IMR-90 (cell line): ENCODE measurements at regions of chr7 and their contacts with region 1.

Region 1: GRCh38 chr7:26667500-26668133 is 196.8 kb downstream of the SKAP2 start:
- DNase-seq: peak; percentile 90
- ATAC-seq: peak; percentile 96
- H3K4me3 ChIP-seq: no peak overlapping the region
- H3K27ac ChIP-seq: no peak overlapping the region
- H3K4me1 ChIP-seq: no peaks in the 10 kb centered on the region
- H3K27me3 ChIP-seq: no peaks in the 10 kb centered on the region
- CTCF ChIP-seq: peak; percentile 95
- POLR2A ChIP-seq: no peak
- RAD21 ChIP-seq: peak; percentile 80

Region 2: GRCh38 chr7:25894902-25895791 is 772.5 kb before region 1 on chr7:
- CTCF ChIA-PET with region 1: interaction called, 5 read pairs
- POLR2A ChIA-PET with region 1: no interaction called
- dilution Hi-C with region 1: no loop called
- in situ Hi-C with region 1: loop called (anchors 10 kb)
- intact Hi-C with region 1: loop called (anchors 1 kb)
- DNase-seq: peak; percentile 2
- ATAC-seq: peak; percentile 69
- H3K4me3 ChIP-seq: peak overlapping the region; percentile 33; the same call in 1 of the 2 replicates
- H3K27ac ChIP-seq: no peak overlapping the region
- H3K4me1 ChIP-seq: no peaks in the 10 kb centered on the region
- H3K27me3 ChIP-seq: peaks cover 25% of the 10 kb centered on the region
- CTCF ChIP-seq: peak; percentile 50
- POLR2A ChIP-seq: no peak
- RAD21 ChIP-seq: no peak

Region 3: DNA sequence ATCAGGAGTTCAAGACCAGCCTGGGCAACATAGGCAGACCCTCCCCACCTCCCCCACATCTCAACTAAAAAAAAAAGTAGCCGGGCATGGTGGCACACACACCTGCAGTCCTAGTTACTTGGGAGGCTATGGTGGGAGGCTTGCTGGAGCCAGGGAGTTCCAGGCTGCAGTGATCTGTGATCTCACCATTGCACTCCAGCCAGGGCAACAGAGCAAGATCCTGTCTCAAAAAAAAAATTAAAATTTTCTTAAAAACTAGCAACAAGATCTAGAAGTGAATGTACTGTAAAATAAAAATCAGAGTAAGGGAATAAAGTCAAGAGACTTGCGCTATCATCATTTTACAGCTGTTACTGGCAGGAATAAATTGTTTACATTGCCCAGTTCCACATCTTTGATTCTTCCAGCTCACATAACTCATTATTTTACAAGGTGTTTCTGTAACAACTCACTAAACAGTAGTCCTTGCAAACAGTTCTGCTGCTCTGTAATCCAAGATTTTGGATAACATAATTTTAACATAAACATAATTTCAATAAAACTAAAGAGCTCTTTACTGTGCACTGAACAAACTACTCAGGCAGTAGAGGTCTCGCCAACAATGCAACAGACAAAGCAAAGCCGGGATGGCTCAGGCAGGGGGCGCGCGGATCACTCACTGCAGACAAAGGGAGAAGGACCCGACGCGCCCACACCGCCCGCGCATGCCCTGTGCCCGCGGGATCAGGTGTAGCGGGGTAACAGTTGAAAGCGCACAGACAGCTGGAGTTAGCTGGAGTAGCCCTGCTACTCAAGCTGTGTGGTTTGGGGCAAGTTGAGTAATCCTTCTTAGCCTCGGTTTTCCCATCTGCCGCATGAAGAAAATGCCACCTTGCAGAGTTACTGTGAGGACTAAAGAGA is 588.9 kb before region 1 on chr7:
- CTCF ChIA-PET with region 1: no interaction called
- POLR2A ChIA-PET with region 1: no interaction called
- dilution Hi-C with region 1: no loop called
- in situ Hi-C with region 1: loop called (anchors 25 kb)
- intact Hi-C with region 1: no loop called
- DNase-seq: no peak
- ATAC-seq: peak; percentile 51; the same call in 1 of the 2 replicates
- H3K4me3 ChIP-seq: no peak overlapping the region
- H3K27ac ChIP-seq: no peak overlapping the region
- H3K4me1 ChIP-seq: no peaks in the 10 kb centered on the region
- H3K27me3 ChIP-seq: peaks cover 43% of the 10 kb centered on the region
- CTCF ChIP-seq: 0 out of 2 replicates have a peak, but pooled peaks have one; percentile 25
- POLR2A ChIP-seq: no peak
- RAD21 ChIP-seq: no peak

Region 4: GRCh38 chr7:26090927-26091519 is 576.6 kb before region 1 on chr7:
- CTCF ChIA-PET with region 1: no interaction called
- POLR2A ChIA-PET with region 1: no interaction called
- dilution Hi-C with region 1: no loop called
- in situ Hi-C with region 1: loop called (anchors 25 kb)
- intact Hi-C with region 1: loop called (anchors 1 kb)
- DNase-seq: peak; percentile 74
- ATAC-seq: peak; percentile 89
- H3K4me3 ChIP-seq: no peak overlapping the region
- H3K27ac ChIP-seq: no peak overlapping the region
- H3K4me1 ChIP-seq: no peaks in the 10 kb centered on the region
- H3K27me3 ChIP-seq: peaks cover 11% of the 10 kb centered on the region
- CTCF ChIP-seq: peak; percentile 76
- POLR2A ChIP-seq: no peak
- RAD21 ChIP-seq: peak; percentile 80

Region 5: GRCh38 chr7:26376175-26376917 is 291.3 kb before region 1 on chr7:
- CTCF ChIA-PET with region 1: interaction called, 4 read pairs
- POLR2A ChIA-PET with region 1: no interaction called
- dilution Hi-C with region 1: no loop called
- in situ Hi-C with region 1: no loop called
- intact Hi-C with region 1: loop called (anchors 1 kb)
- DNase-seq: no peak
- ATAC-seq: no peak
- H3K4me3 ChIP-seq: no peak overlapping the region
- H3K27ac ChIP-seq: no peak overlapping the region
- H3K4me1 ChIP-seq: no peaks in the 10 kb centered on the region
- H3K27me3 ChIP-seq: peaks cover 41% of the 10 kb centered on the region
- CTCF ChIP-seq: no peak
- POLR2A ChIP-seq: no peak
- RAD21 ChIP-seq: no peak

Region 6: GRCh38 chr7:26500749-26501352 is 166.8 kb before region 1 on chr7:
- CTCF ChIA-PET with region 1: no interaction called
- POLR2A ChIA-PET with region 1: no interaction called
- dilution Hi-C with region 1: no loop called
- in situ Hi-C with region 1: no loop called
- intact Hi-C with region 1: loop called (anchors 10 kb)
- DNase-seq: peak; percentile 16
- ATAC-seq: no peak
- H3K4me3 ChIP-seq: no peak overlapping the region
- H3K27ac ChIP-seq: no peak overlapping the region
- H3K4me1 ChIP-seq: no peaks in the 10 kb centered on the region
- H3K27me3 ChIP-seq: no peaks in the 10 kb centered on the region
- CTCF ChIP-seq: peak; percentile 42
- POLR2A ChIP-seq: no peak
- RAD21 ChIP-seq: peak; percentile 34; the same call in 1 of the 2 replicates